Lower leg skin (tissue), 4 donors: ENCODE measurements at regions of chr10 and their contacts with region 1.

Region 1: GRCh38 chr10:69506834-69507721 is 55.8 kb downstream of the TSPAN15 start:
- DNase-seq: peak in 1 of 2 donors; percentile 83
- H3K4me3 ChIP-seq: no peak overlapping the region
- CTCF ChIP-seq: no peak
- POLR2A ChIP-seq: no peak

Region 2: GRCh38 chr10:67575532-67575931 is 1931.5 kb before region 1 on chr10:
- intact Hi-C with region 1: no loop called
- DNase-seq: no peak
- H3K4me3 ChIP-seq: no peak overlapping the region
- CTCF ChIP-seq: no peak
- POLR2A ChIP-seq: no peak

Region 3: GRCh38 chr10:69408318-69409175 is 98.5 kb before region 1 on chr10:
- intact Hi-C with region 1: loop called (anchors 5 kb)
- DNase-seq: peak; percentile 92 to 99
- H3K4me3 ChIP-seq: no peak overlapping the region
- CTCF ChIP-seq: no peak
- POLR2A ChIP-seq: no peak

Region 4: GRCh38 chr10:69425511-69426298 is 81.4 kb before region 1 on chr10:
- intact Hi-C with region 1: loop called (anchors 5 kb)
- DNase-seq: peak in 1 of 2 donors; percentile 68
- H3K4me3 ChIP-seq: no peak overlapping the region
- CTCF ChIP-seq: no peak
- POLR2A ChIP-seq: no peak

Region 5: DNA sequence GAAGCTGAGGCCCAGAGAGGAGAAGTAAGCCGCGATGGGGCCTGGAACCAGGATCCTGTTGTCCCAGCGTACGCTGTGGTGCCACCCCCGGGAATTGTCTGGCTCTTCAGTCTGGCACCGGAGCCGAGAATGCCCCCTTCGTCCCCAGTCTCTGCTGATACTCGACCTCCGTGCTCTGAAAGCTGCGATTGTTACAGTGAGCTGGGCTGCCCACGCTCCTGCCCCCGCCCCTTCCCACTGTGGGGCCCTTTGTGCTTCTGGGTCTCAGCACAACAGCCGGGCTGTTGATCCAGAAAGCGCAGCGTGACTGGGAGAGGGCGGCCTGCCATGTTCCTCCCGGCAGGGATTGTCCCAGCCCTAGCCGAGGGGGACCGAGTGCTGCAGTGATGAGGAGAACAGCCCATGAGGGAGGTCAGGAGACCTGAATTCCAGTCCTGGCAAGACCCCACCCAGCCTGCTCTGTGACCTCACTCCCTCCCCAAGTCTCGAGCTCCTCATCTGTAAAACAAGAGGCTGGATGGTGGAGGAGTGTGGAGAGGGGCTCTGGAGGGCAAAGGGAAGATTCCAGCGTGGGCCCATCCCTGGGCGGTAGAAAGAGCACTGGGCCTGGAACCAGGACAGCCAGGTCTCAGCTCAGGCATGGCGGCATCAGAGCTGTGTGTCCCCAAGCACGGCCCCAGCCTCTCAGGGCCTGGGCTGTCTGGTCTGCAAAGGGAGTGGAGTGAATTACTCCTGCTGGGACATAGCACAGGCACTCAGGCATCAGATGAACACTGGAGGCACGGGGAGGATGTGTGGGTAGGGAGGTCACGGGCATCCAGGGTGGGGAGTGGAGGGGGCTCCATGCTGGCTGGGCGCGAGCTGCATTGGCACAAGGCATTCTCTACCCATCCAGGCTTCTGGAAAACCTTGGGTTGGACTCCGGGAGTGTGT is 12.2 kb before region 1 on chr10:
- intact Hi-C with region 1: no loop called
- DNase-seq: peak in 1 of 2 donors; percentile 82
- H3K4me3 ChIP-seq: no peak overlapping the region
- CTCF ChIP-seq: no peak
- POLR2A ChIP-seq: no peak

Region 6: DNA sequence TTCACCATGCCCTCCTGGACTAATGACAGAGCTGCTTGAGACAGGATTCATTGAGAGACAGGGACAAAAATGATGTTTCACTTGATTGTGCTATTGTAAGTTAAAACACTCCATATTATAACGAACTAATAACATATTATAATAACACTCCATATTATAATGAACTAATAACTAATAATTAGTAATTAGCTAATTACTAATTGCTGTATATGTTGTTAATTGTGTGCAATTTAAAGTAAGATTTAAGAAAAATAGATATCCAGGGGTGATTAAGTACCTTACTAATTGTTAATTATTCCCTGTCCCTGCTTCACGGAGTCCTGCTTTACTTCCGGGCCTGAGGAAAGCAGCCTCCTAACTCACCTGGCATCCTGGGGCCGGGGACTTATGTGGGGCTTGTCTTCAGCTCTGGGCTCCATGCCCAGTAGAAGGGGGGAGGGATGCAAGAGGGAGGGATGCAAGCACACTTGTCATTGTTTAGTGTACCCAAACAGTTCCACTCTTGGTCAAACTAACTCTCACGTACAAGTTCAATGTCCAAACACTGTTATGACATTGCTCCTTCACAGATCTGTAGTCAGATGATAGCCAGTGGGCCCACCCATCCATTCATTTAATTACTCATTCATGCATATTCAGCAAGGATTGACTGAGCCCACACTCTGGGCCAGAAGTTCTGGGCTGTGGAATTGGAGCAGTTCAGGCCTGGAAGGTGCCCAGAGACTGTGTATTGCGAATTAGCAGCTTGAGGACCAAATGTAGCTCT is 348.5 kb after region 1 on chr10:
- intact Hi-C with region 1: no loop called
- DNase-seq: no peak
- H3K4me3 ChIP-seq: no peak overlapping the region
- CTCF ChIP-seq: no peak
- POLR2A ChIP-seq: no peak